Sciatic nerve (tissue), 2 donors: ENCODE measurements at regions of chr5 and their contacts with region 1.

Region 1: GRCh38 chr5:34639852-34640605 is 16.1 kb upstream of the RAI14 start:
- DNase-seq: no peak
- ATAC-seq: no peak

Region 2: GRCh38 chr5:32726086-32726557 is 1913.9 kb before region 1 on chr5:
- intact Hi-C with region 1: loop called (anchors 10 kb)
- DNase-seq: no peak
- ATAC-seq: no peak

Region 3: GRCh38 chr5:32828492-32828891 is 1811.5 kb before region 1 on chr5:
- intact Hi-C with region 1: loop called (anchors 10 kb)
- DNase-seq: no peak
- ATAC-seq: no peak